ENCODE measurements at regions of chr5 and their contacts with region 1.

Region 1: DNA sequence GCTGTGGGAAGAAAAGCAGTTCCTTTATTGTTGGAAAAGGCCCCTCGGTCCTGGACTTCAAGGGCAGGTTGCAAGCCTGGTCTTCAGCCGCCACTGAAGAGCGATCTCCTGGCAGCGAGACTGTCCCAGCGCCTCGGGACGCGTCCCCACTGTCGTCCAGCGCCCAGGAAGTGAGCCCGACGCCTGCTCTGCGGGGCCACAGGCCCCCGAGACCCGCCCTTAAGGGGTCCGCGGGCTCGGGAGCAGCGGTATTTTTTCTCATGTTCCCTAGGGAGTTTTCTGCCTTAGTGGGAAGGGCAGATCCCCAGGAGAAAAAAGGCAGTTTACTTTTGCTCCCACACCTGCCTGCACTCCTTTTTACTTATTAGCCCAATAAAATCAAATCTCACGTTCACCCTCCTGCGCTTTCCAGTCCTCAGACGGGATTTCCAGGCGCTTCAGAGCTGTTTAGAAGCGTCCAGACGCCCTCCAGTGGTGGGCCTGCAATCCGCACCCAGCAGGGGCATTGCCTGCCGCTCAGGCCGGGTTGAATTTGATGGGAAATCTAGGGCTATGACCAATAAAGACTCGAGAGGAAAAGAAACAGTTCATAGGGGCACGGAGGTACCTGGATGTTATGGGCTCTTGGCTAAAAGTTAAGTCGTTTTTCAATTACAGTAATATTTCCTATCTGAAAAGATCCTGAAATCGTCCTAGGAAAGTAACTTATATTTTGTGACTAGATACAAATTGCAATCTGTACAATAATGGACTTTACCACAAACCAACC is 2.8 kb upstream of the EFNA5 start:
- DNase-seq: peak; percentile 59
- H3K4me3 Mint-ChIP-seq: peak overlapping the region; percentile 70
- H3K27ac Mint-ChIP-seq: no peak overlapping the region
- H3K4me1 Mint-ChIP-seq: peaks cover 26% of the 10 kb centered on the region
- H3K27me3 Mint-ChIP-seq: peaks cover 62% of the 10 kb centered on the region

Region 2: DNA sequence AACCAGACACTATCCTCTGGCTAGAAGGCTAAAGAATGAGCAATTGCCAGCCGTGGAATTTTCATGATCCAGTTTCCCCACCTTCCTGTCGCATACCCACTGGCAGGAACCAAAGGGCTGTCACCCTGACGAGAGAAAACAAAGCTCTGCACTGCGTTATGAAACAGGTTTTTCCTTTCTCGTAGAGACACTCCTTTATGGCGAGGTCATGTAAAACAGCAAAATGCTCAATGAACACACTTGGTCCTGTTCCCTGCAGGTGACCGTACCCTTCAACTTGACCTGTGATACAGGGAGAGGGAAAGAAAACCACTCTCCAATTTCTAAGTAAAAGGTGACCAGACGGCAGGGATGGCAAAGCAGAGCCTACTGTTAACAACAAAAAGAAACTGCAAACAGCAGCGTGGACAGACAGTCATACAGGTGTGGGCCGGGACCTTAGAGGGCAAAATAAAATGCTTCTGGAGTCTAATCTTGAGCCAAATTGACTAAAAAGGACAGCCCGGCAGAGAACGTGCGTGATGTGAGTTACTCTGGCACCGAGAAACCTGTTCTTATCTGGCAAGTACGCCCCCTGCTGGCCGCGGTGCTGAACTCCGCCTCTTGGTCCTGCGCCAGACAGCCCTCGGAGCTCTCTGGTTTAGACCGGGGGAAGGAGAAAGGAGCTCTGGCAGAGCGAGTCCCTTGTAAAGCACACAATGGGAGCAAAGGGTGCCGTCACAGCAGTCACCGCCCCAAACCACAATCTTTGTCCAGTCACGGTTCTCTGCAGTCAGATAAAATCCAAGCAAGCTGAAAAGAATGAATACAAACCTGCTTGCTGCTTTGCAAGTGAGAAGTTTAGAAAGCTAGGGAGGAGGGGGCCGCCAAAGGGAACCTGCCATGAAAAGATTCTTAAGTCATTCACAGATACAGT is 101.7 kb before region 1 on chr5:
- intact Hi-C with region 1: loop called (anchors 5 kb)
- DNase-seq: peak; percentile 76
- H3K4me3 Mint-ChIP-seq: peak overlapping the region; percentile 56
- H3K27ac Mint-ChIP-seq: no peak overlapping the region
- H3K4me1 Mint-ChIP-seq: peaks cover 18% of the 10 kb centered on the region
- H3K27me3 Mint-ChIP-seq: peaks cover 36% of the 10 kb centered on the region

Region 3: DNA sequence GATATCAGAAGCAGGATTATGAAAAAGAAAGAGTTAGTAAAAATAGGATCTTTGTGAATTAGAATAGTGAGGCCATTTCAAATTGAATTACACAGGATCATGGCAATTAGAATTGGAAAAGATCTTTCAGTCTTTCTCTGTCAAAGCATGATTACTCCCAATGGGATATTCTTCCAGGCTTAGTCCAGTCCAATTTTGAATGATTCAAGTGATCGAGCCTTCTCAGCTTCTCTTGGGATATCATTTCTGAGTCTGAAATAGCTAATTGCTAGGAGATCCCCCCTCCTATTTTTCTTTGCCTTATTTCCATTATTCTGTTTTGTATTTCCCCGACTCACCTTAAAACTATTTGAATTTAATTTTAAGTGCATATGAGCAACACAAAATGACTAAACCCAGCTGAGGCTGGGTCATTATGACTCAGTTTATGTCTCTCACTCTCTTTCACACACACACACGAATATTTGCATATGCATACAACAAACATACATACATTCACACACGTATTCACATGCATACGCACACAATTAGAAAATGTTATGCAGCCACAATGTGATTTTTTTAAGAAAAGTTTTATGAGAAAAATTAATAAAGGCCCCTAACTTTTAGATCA is 32.0 kb after region 1 on chr5:
- intact Hi-C with region 1: no loop called
- DNase-seq: no peak
- H3K4me3 Mint-ChIP-seq: no peak overlapping the region
- H3K27ac Mint-ChIP-seq: no peak overlapping the region
- H3K4me1 Mint-ChIP-seq: no peaks in the 10 kb centered on the region
- H3K27me3 Mint-ChIP-seq: peaks cover 6% of the 10 kb centered on the region

Measured in activated T-helper 2 cell treated with anti-CD3 and anti-CD28 coated beads, Interferon-gamma antibody, Interleukin-2, Interleukin-4, amounts not matched to agents 10 μg/mL and 5 μg/mL and 100 μg/mL, durations not matched to agents 14 hours and 24 hours and 36 hours (primary cell).